H1 (cell line): ENCODE measurements at regions of chr15 and their contacts with region 1.

Region 1: DNA sequence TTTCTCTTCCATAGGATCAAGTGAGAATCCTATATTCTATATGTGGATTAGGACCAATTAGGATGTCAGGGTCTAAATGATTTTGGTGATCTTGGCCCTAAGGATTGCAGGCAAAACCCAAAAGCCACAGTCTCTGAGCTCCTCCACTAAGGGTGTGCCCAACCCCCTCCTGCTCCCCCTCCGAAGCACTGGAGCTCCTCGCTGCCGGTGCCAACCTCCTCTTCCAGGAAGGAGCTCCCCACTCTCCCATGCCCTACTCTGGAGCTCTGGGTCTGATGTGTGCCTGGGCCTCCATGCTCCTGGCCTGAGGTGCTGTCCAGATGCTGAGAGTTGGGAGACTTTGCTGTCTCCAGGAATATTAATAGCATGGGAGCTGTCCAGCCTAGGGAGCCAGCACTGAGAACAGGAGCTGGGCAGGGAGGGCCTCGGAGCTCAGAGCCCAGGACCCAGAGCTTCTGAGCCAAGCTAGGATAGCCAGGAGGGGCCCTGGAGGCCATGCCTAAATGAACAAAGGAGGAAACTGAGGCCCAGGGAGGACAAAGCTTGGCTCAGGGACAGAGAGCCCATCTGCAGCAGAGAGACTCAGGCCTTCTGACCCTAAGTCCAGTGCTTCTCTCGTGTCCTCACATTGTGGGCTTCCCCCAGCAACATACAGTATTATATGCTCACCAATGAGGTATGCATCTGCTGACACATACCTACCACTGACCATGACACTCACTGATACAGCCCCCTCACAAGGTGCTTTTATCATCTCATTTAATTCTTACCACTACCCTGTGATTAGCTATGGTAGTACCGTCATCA is 36.9 kb upstream of the HERC1 start:
- DNase-seq: peak in 1 of 2 experiments; percentile 9
- H3K4me3 ChIP-seq: no peak overlapping the region
- H3K27ac ChIP-seq: no peak overlapping the region
- H3K4me1 ChIP-seq: no peaks in the 10 kb centered on the region
- H3K27me3 ChIP-seq: no peaks in the 10 kb centered on the region
- CTCF ChIP-seq: no peak
- EP300 ChIP-seq: no peak
- POLR2A ChIP-seq: no peak
- RAD21 ChIP-seq: peak in 1 of 2 experiments; percentile 18; a peak in 1 of 4 replicates

Region 2: DNA sequence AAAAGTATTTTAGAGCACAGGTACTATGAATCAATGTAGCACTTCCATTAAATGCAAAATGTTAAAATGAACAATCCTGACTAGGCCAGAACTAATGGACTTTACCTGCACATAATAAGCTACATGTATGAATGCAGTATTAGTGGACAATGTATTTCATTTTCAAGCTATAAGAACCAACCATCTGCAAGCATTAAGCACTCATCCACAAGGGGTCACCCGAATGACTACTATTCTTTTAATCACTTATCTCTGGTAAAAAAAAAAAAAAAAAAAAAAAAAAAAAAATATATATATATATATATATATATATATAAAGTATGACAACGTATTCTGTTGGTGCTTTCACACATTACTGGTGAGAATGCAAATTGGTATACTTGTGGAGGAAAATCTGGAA is 44.1 kb before region 1 on chr15:
- CTCF ChIA-PET with region 1: no interaction called
- POLR2A ChIA-PET with region 1: no interaction called
- DNase-seq: no peak
- H3K4me3 ChIP-seq: no peak overlapping the region
- H3K27ac ChIP-seq: no peak overlapping the region
- H3K4me1 ChIP-seq: no peaks in the 10 kb centered on the region
- H3K27me3 ChIP-seq: no peaks in the 10 kb centered on the region
- CTCF ChIP-seq: no peak
- EP300 ChIP-seq: no peak
- POLR2A ChIP-seq: no peak
- RAD21 ChIP-seq: no peak

Region 3: DNA sequence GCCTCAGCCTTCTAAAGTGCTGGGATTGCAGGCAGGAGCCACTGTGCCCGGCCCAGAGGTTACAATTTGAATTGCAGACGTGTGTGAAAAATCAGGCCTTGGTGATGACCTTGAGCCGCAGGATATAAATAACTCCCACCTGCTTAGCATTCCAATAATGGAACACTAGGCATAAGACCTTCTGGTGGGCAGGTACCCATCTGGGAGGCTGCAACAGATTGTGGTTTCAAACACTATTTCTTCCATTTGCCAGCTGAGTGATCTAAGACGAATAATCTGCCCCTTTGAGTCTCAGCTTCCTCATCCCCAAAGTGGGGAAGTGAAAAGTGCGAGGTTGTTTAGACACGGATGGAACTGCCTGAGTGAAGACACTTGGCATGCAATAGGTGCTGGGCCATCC is 10.8 kb after region 1 on chr15:
- CTCF ChIA-PET with region 1: interaction called, 16 read pairs
- POLR2A ChIA-PET with region 1: no interaction called
- DNase-seq: no peak
- H3K4me3 ChIP-seq: no peak overlapping the region
- H3K27ac ChIP-seq: no peak overlapping the region
- H3K4me1 ChIP-seq: peaks cover 3 to 19% (median 6%) of the 10 kb centered on the region in 4 experiments
- H3K27me3 ChIP-seq: no peaks in the 10 kb centered on the region
- CTCF ChIP-seq: no peak
- EP300 ChIP-seq: no peak
- POLR2A ChIP-seq: no peak
- RAD21 ChIP-seq: no peak

Region 4: GRCh38 chr15:63891079-63891767 is 20.6 kb after region 1 on chr15:
- CTCF ChIA-PET with region 1: interaction called, 10 read pairs
- POLR2A ChIA-PET with region 1: no interaction called
- DNase-seq: peak; percentile 80 to 94
- H3K4me3 ChIP-seq: no peak overlapping the region
- H3K27ac ChIP-seq: no peak overlapping the region
- H3K4me1 ChIP-seq: peaks cover 0 to 3% (median 0%) of the 10 kb centered on the region in 4 experiments; a peak in 1 of 7 replicates
- H3K27me3 ChIP-seq: no peaks in the 10 kb centered on the region
- CTCF ChIP-seq: peak; percentile 88 to 91 (median 90)
- EP300 ChIP-seq: no peak
- POLR2A ChIP-seq: no peak
- RAD21 ChIP-seq: peak; percentile 86 to 90